AG04450 (cell line): ENCODE measurements at regions of chr2 and their contacts with region 1.

Region 1: GRCh38 chr2:235116885-235117492 is 165.2 kb downstream of the SH3BP4 start:
- DNase-seq: no peak
- H3K4me3 ChIP-seq: no peak overlapping the region
- H3K27ac ChIP-seq: no peak overlapping the region
- H3K27me3 ChIP-seq: no peaks in the 10 kb centered on the region
- CTCF ChIP-seq: peak; percentile 64

Region 2: DNA sequence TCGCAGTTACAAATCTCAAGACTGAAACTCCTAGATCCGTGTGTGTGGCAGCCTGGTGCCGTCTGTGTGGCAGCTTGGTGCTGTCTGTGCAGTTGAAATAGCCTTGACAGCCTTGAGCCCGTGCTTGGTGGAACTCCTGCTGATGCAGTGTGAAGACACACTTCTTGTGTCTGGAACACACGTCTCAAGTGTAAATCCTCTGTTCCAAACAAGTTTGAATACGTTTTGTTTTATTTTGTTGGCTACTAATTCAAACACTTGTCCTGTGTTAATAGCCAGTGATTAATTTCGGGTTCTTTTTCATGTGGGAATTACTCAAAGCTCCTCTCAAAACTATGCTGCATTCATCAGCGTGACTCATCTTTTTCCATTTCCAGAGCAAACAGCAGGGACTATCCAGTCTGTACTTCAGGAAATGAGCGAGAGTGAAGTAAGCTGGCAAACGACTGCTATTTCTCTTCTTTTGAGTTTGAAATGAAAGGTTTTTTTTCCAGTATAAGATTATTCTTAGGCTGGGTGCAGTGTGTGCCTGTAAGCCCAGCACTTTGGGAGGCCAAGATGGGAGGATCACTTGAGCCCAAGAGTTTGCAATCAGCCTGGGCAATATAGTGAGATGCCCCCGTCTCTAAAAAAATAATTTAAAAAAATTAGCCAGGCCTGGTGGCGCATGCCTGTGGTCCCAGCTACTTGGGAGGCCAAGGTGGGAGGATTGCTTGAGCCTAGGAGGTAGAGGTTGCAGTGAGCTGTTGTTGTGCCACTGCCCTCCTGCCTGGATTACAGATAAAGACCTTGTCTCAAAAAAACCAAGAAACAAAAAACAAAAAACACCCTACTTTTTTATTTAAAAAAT is 913.6 kb before region 1 on chr2:
- CTCF ChIA-PET with region 1: no interaction called
- POLR2A ChIA-PET with region 1: interaction called, 16 read pairs
- DNase-seq: peak; percentile 79
- H3K4me3 ChIP-seq: no peak overlapping the region
- H3K27ac ChIP-seq: peak overlapping the region; percentile 63
- H3K27me3 ChIP-seq: peaks cover 15% of the 10 kb centered on the region
- CTCF ChIP-seq: no peak

Region 3: GRCh38 chr2:234500394-234501006 is 616.5 kb before region 1 on chr2:
- CTCF ChIA-PET with region 1: interaction called, 22 read pairs
- POLR2A ChIA-PET with region 1: interaction called, 4 read pairs
- DNase-seq: no peak
- H3K4me3 ChIP-seq: no peak overlapping the region
- H3K27ac ChIP-seq: no peak overlapping the region
- H3K27me3 ChIP-seq: no peaks in the 10 kb centered on the region
- CTCF ChIP-seq: peak; percentile 64

Region 4: GRCh38 chr2:234550511-234551107 is 566.4 kb before region 1 on chr2:
- CTCF ChIA-PET with region 1: interaction called, 107 read pairs
- POLR2A ChIA-PET with region 1: no interaction called
- DNase-seq: peak; percentile 78
- H3K4me3 ChIP-seq: no peak overlapping the region
- H3K27ac ChIP-seq: no peak overlapping the region
- H3K27me3 ChIP-seq: no peaks in the 10 kb centered on the region
- CTCF ChIP-seq: peak; percentile 97

Region 5: DNA sequence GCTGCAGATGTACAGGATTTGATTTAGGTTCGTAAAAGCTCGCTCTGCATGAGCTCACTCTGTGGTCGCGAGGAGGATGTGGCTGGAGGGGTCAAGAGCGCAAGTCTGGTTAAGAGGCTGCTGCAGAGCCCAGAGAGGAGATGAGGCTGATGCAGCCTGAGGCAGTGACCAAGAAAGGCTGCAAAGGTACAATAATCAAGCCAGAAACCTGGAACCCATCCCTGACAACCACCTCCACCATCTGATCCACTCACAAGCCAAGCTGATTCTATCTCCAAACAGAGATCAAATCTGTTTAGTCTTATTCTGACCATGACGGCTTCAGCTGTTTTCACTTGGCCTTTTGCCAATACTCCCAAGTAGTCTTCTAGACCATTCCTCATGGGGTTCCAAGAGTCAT is 561.3 kb before region 1 on chr2:
- CTCF ChIA-PET with region 1: interaction called, 27 read pairs
- POLR2A ChIA-PET with region 1: no interaction called
- DNase-seq: no peak
- H3K4me3 ChIP-seq: no peak overlapping the region
- H3K27ac ChIP-seq: no peak overlapping the region
- H3K27me3 ChIP-seq: no peaks in the 10 kb centered on the region
- CTCF ChIP-seq: no peak

Region 6: GRCh38 chr2:234564699-234565098 is 552.3 kb before region 1 on chr2:
- CTCF ChIA-PET with region 1: interaction called, 13 read pairs
- POLR2A ChIA-PET with region 1: no interaction called
- DNase-seq: peak; percentile 49
- H3K4me3 ChIP-seq: no peak overlapping the region
- H3K27ac ChIP-seq: no peak overlapping the region
- H3K27me3 ChIP-seq: no peaks in the 10 kb centered on the region
- CTCF ChIP-seq: peak; percentile 64

Region 7: GRCh38 chr2:234950730-234951663 is 166.0 kb before region 1 on chr2:
- CTCF ChIA-PET with region 1: interaction called, 18 read pairs
- POLR2A ChIA-PET with region 1: no interaction called
- DNase-seq: no peak
- H3K4me3 ChIP-seq: peak overlapping the region; percentile 67
- H3K27ac ChIP-seq: peak overlapping the region; percentile 94
- H3K27me3 ChIP-seq: no peaks in the 10 kb centered on the region
- CTCF ChIP-seq: no peak